Caco-2 (cell line): ENCODE measurements at regions of chr1 and their contacts with region 1.

Region 1: GRCh38 chr1:245645894-245646293 is 491.1 kb downstream of the KIF26B start:
- DNase-seq: no peak
- H3K4me3 ChIP-seq: no peak overlapping the region
- H3K4me3 Mint-ChIP-seq: no peak overlapping the region
- H3K27ac Mint-ChIP-seq: no peak overlapping the region
- H3K4me1 ChIP-seq: no peaks in the 10 kb centered on the region
- H3K4me1 Mint-ChIP-seq: no peaks in the 10 kb centered on the region
- H3K27me3 ChIP-seq: no peaks in the 10 kb centered on the region
- H3K27me3 Mint-ChIP-seq: no peaks in the 10 kb centered on the region
- CTCF ChIP-seq: no peak

Region 2: GRCh38 chr1:245622332-245623023 is 23.4 kb before region 1 on chr1:
- CTCF ChIA-PET with region 1: no interaction called
- POLR2A ChIA-PET with region 1: interaction called, 10 read pairs
- intact Hi-C with region 1: no loop called
- DNase-seq: peak in 1 of 2 experiments; percentile 56
- H3K4me3 ChIP-seq: no peak overlapping the region
- H3K4me3 Mint-ChIP-seq: no peak overlapping the region
- H3K27ac Mint-ChIP-seq: peak overlapping the region; percentile 20
- H3K4me1 ChIP-seq: no peaks in the 10 kb centered on the region
- H3K4me1 Mint-ChIP-seq: peaks cover 10% of the 10 kb centered on the region
- H3K27me3 ChIP-seq: no peaks in the 10 kb centered on the region
- H3K27me3 Mint-ChIP-seq: no peaks in the 10 kb centered on the region
- CTCF ChIP-seq: no peak